Head of caudate nucleus (tissue), 42 donors: ENCODE measurements at regions of chr6 and their contacts with region 1.

Region 1: GRCh38 chr6:83067448-83068413 is at the start of gene DOP1A:
- DNase-seq: peak; percentile 91 to 99 (median 97)

Region 2: GRCh38 chr6:82584194-82584695 is 483.5 kb before region 1 on chr6:
- intact Hi-C with region 1: no loop called
- DNase-seq: no peak

Region 3: DNA sequence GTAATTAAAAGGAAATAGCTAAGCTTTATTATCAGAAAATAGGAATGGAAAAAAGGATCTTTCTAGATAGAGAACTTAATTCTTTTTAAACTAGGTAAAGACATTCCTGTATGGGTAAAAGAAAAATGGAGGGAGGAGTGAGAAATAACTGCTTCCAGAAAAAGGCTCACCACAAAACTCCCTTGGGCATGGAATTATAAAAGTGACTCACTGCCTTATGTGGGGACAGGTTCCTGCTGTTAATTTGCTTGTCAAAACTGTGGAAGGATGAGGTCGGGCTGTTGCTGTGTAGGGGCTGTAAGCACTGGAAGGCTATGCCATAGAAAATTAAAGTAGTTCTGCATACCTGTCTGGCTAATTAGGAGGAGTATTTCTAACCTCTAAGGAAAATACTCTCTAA is 160.8 kb before region 1 on chr6:
- intact Hi-C with region 1: no loop called
- DNase-seq: peak in 5 of 42 donors; percentile 11 to 42 (median 19)

Region 4: DNA sequence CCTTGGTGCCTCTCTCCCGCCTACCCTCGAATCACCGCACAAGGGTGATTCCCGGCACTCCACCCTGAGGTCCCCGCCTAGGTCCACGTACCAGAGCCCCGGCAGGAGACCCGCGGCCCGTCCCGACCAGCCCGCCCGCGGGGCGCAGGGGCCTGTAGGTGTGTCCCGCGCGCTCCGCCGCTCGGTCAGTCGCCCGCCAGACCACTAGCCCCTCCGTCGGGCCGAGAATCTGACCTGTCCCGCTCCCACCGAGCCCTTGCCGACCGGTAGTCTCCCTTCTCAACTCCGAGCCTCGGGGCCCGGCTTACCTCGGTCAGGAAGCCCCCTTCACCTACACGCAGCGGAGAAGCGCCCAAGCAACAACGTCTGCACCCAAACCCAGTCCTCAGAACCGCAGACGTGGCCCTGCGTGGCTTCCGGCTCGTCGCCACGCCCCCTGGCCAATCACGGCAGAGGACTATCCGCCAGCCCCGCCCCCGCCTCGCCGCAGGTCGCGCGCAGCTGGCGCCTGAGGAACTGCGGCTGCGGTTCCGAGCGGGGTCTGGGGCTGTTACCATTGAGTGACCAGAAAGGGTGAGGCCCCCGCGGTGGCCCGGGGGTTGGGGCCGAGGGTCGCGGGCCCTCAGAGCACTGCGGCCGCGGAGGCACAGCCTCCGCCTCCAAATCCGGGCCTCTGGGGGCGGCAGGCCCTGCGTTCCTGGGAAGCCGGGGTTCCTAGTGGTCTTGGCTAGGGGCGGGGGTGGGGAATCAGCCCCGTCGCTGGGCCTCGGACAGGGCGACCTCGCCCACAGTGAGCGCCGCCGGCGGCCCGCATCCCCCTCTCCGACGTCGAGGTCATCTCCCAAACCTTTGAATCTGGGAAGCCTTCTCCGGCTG is 125.4 kb after region 1 on chr6 and contains the starts of genes PGM3 and RWDD2A:
- intact Hi-C with region 1: loop called (anchors 5 kb)
- DNase-seq: peak; percentile 82 to 97 (median 93)

Region 5: DNA sequence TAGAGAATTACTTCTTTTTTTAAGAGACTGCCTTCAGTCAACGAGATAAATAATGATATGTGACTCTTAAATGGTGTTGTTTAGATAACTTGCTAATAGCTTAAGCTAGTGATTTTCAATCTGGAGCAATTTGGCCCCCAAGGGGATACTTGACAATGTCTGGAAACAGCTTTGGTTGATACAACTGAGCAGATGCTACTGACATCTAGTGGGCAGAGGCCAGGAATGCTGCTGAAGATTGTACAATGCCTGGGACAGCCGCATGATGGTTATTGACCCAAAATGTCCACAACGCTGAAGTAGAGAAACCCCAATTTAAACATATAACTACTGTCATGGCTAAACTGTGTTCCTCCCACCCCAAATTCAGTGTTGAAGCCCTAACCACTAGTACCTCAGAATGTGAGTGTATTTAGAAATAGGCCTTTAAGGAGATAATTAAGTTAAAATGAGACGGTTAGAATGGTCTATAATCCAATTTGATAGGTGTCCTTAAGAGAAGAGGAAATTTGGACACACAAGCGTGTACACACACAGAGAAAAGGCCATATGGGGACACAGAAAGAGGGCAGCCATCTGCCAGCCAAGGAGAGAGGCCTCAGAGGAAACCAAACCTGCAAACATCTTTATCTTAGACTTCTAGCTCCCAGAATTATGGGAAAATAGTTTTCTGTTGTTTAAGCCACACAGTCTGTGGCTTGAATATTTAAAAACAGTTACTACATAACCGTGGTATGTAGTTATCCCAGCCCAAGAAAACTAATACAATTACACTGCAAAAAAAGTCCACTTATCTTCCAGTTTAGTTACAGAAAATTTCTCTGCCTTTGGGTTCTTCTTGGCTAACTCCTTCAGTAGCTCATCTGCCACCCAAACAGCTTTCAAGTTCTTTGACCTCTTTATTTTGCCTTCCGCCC is 147.7 kb after region 1 on chr6:
- intact Hi-C with region 1: loop called (anchors 5 kb)
- DNase-seq: peak; percentile 7 to 90 (median 72)

Region 6: GRCh38 chr6:83592770-83593394 is 525.2 kb after region 1 on chr6:
- intact Hi-C with region 1: no loop called
- DNase-seq: no peak

Region 7: DNA sequence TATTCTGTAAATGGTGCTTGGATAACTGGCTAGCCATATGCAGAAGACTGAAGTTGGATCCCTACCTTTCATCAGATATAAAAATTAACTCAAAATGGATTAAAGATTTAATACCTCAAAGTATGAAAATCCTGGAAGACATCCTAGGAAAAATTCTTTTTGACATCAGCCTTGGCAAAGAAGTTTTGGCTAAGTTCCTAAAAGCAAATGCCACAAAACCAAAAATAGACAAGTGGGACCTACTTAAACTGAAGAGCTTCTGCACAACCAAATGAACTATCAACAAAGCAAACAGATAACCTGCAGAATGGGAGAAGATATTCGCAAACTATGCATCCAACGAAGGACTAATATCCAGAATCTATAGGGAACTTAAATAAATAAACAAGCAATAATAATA is 725.1 kb after region 1 on chr6:
- intact Hi-C with region 1: no loop called
- DNase-seq: no peak